Heart right ventricle (tissue), 16 donors: ENCODE measurements at regions of chr14 and their contacts with region 1.

Region 1: DNA sequence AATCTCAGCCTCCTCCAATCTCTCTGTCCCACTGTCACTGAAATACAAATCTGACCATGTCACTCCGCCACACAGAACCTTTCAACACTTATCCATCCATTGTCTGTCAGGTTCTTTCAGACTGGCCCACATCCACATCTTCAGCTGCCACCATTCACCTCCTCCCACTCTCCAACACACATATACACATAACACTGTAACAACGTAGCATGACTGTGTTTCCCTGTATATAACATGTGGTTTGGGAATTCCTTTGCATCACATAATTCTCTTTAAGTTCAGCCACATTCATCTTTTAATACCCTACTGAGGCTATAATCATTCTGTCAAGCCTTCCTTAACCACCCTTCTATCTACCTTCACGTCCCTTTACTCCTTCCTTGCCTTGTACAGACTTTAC is 99.2 kb downstream of the PPP2R5E start:
- DNase-seq: no peak
- ATAC-seq: peak in 2 of 8 donors; percentile 17 to 23
- H3K4me3 ChIP-seq: no peak overlapping the region
- H3K27ac ChIP-seq: no peak overlapping the region
- H3K4me1 ChIP-seq: peaks cover 0 to 33% (median 7%) of the 10 kb centered on the region in 9 donors
- H3K27me3 ChIP-seq: no peaks in the 10 kb centered on the region
- CTCF ChIP-seq: no peak

Region 2: GRCh38 chr14:63091394-63091996 is 352.5 kb before region 1 on chr14:
- intact Hi-C with region 1: no loop called
- DNase-seq: no peak
- ATAC-seq: no peak
- H3K4me3 ChIP-seq: no peak overlapping the region
- H3K27ac ChIP-seq: no peak overlapping the region
- H3K4me1 ChIP-seq: no peaks in the 10 kb centered on the region
- H3K27me3 ChIP-seq: peaks cover 0 to 4% (median 0%) of the 10 kb centered on the region in 7 donors
- CTCF ChIP-seq: no peak

Region 3: GRCh38 chr14:63174760-63175211 is 269.2 kb before region 1 on chr14:
- intact Hi-C with region 1: no loop called
- DNase-seq: peak in 1 of 2 donors; percentile 51
- ATAC-seq: peak in 7 of 8 donors; percentile 61 to 83 (median 74)
- H3K4me3 ChIP-seq: no peak overlapping the region
- H3K27ac ChIP-seq: peak overlapping the region in 1 of 10 donors; percentile 2
- H3K4me1 ChIP-seq: peaks cover 0 to 21% (median 14%) of the 10 kb centered on the region in 9 donors
- H3K27me3 ChIP-seq: no peaks in the 10 kb centered on the region
- CTCF ChIP-seq: peak; percentile 57 to 84 (median 70)

Region 4: DNA sequence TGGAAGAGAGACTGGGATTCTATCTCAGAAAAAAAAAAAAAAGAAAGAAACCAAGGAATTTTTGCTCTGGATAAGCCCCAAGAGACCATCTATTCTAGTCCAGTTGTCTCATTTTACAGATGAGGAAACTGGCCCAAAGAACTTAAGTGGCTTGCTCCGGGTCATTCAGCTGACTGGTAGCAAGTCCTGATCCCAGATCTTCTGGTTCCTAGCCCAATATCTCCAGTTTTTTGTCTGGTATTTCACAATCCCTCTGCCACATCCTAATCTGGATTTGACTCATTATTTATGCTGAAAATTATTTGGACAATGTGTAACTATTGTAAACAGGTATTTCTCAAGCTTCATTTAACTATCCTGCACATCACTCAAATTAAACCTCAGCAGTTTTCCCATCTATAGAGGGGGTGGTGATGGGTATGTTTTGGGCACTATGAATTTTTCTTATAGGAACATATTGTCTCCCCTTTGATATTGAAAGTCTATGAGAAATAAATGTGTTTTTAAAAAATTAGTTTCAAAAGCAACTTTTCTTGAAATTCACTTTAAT is 55.8 kb after region 1 on chr14:
- intact Hi-C with region 1: loop called in 2 of 10 experiments (anchors 5 to 10 kb)
- DNase-seq: no peak
- ATAC-seq: peak in 3 of 8 donors; percentile 16 to 74 (median 25)
- H3K4me3 ChIP-seq: no peak overlapping the region
- H3K27ac ChIP-seq: peak overlapping the region in 2 of 10 donors; percentile 18 to 31
- H3K4me1 ChIP-seq: peaks cover 0 to 41% (median 21%) of the 10 kb centered on the region in 9 donors
- H3K27me3 ChIP-seq: no peaks in the 10 kb centered on the region
- CTCF ChIP-seq: no peak